ENCODE measurements at regions of chr9 and their contacts with region 1.

Region 1: GRCh38 chr9:104386425-104387069 is 117.5 kb upstream of the OR13F1 start:
- DNase-seq: peak; percentile 48
- H3K4me3 Mint-ChIP-seq: no peak overlapping the region
- H3K27ac Mint-ChIP-seq: no peak overlapping the region
- H3K4me1 Mint-ChIP-seq: no peaks in the 10 kb centered on the region
- H3K27me3 Mint-ChIP-seq: no peaks in the 10 kb centered on the region
- CTCF ChIP-seq: peak; percentile 61

Region 2: GRCh38 chr9:102631559-102631958 is 1755.0 kb before region 1 on chr9:
- CTCF ChIA-PET with region 1: no interaction called
- POLR2A ChIA-PET with region 1: no interaction called
- intact Hi-C with region 1: loop called (anchors 10 kb)
- DNase-seq: peak; percentile 35
- H3K4me3 Mint-ChIP-seq: no peak overlapping the region
- H3K27ac Mint-ChIP-seq: no peak overlapping the region
- H3K4me1 Mint-ChIP-seq: no peaks in the 10 kb centered on the region
- H3K27me3 Mint-ChIP-seq: peaks cover 1% of the 10 kb centered on the region
- CTCF ChIP-seq: peak; percentile 35

Region 3: GRCh38 chr9:103397868-103398600 is 988.5 kb before region 1 on chr9:
- CTCF ChIA-PET with region 1: interaction called, 4 read pairs
- POLR2A ChIA-PET with region 1: no interaction called
- intact Hi-C with region 1: loop called (anchors 1 kb)
- DNase-seq: peak; percentile 65
- H3K4me3 Mint-ChIP-seq: no peak overlapping the region
- H3K27ac Mint-ChIP-seq: no peak overlapping the region
- H3K4me1 Mint-ChIP-seq: peaks cover 6% of the 10 kb centered on the region
- H3K27me3 Mint-ChIP-seq: no peaks in the 10 kb centered on the region
- CTCF ChIP-seq: peak; percentile 76

Region 4: GRCh38 chr9:104027295-104027694 is 359.3 kb before region 1 on chr9:
- CTCF ChIA-PET with region 1: no interaction called
- POLR2A ChIA-PET with region 1: no interaction called
- intact Hi-C with region 1: loop called (anchors 1 kb)
- DNase-seq: no peak
- H3K4me3 Mint-ChIP-seq: peak overlapping the region; percentile 19
- H3K27ac Mint-ChIP-seq: peak overlapping the region; percentile 16
- H3K4me1 Mint-ChIP-seq: peaks cover 17% of the 10 kb centered on the region
- H3K27me3 Mint-ChIP-seq: no peaks in the 10 kb centered on the region
- CTCF ChIP-seq: no peak

Region 5: DNA sequence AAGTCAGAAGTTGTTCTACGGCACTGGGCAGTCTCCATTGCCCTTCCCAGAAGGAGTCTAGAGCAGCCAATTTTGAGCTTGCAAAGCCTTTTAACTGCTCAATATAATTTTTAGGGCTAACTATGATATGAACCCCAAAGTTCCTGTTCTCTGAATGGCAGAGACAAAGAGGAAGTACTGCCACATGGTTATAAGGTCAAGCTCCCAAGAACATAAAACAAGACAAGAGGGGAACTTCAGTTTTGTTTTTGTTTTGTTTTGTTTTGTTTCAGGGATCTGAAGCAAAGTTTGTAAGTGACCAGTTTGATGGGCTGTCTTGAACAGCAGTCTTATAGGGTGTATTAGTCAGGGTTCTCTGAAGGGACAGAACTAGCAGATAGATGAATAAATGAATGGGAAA is 304.4 kb before region 1 on chr9:
- CTCF ChIA-PET with region 1: no interaction called
- POLR2A ChIA-PET with region 1: no interaction called
- intact Hi-C with region 1: no loop called
- DNase-seq: no peak
- H3K4me3 Mint-ChIP-seq: no peak overlapping the region
- H3K27ac Mint-ChIP-seq: no peak overlapping the region
- H3K4me1 Mint-ChIP-seq: no peaks in the 10 kb centered on the region
- H3K27me3 Mint-ChIP-seq: no peaks in the 10 kb centered on the region
- CTCF ChIP-seq: no peak

Region 6: GRCh38 chr9:104367515-104367914 is 19.0 kb before region 1 on chr9:
- CTCF ChIA-PET with region 1: interaction called, 11 read pairs
- POLR2A ChIA-PET with region 1: interaction called, 4 read pairs
- intact Hi-C with region 1: no loop called
- DNase-seq: no peak
- H3K4me3 Mint-ChIP-seq: no peak overlapping the region
- H3K27ac Mint-ChIP-seq: no peak overlapping the region
- H3K4me1 Mint-ChIP-seq: no peaks in the 10 kb centered on the region
- H3K27me3 Mint-ChIP-seq: no peaks in the 10 kb centered on the region
- CTCF ChIP-seq: no peak

Region 7: DNA sequence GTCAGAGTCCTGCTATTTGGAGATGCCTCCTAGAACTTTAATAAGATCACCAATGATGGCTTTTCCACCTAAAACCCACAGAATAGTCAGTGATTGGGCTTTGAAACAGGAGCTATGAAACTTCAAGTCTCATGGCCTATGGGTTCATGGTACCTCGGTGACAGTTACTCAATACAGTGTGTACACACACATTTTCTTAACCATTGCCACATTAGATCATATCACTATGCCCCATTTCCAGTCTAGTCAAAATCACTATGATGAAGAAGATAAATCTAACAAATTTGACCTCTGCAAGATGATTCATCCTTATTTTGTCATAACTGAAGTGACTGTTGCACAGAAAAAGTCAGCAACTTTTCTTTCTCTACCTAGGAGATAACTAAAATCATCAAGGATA is 30.7 kb after region 1 on chr9:
- CTCF ChIA-PET with region 1: no interaction called
- POLR2A ChIA-PET with region 1: no interaction called
- intact Hi-C with region 1: no loop called
- DNase-seq: no peak
- H3K4me3 Mint-ChIP-seq: no peak overlapping the region
- H3K27ac Mint-ChIP-seq: no peak overlapping the region
- H3K4me1 Mint-ChIP-seq: no peaks in the 10 kb centered on the region
- H3K27me3 Mint-ChIP-seq: no peaks in the 10 kb centered on the region
- CTCF ChIP-seq: no peak

Region 8: GRCh38 chr9:104494808-104495207 is 108.3 kb after region 1 on chr9:
- CTCF ChIA-PET with region 1: interaction called, 10 read pairs
- POLR2A ChIA-PET with region 1: no interaction called
- intact Hi-C with region 1: no loop called
- DNase-seq: peak; percentile 6
- H3K4me3 Mint-ChIP-seq: no peak overlapping the region
- H3K27ac Mint-ChIP-seq: no peak overlapping the region
- H3K4me1 Mint-ChIP-seq: no peaks in the 10 kb centered on the region
- H3K27me3 Mint-ChIP-seq: no peaks in the 10 kb centered on the region
- CTCF ChIP-seq: peak; percentile 42

Region 9: DNA sequence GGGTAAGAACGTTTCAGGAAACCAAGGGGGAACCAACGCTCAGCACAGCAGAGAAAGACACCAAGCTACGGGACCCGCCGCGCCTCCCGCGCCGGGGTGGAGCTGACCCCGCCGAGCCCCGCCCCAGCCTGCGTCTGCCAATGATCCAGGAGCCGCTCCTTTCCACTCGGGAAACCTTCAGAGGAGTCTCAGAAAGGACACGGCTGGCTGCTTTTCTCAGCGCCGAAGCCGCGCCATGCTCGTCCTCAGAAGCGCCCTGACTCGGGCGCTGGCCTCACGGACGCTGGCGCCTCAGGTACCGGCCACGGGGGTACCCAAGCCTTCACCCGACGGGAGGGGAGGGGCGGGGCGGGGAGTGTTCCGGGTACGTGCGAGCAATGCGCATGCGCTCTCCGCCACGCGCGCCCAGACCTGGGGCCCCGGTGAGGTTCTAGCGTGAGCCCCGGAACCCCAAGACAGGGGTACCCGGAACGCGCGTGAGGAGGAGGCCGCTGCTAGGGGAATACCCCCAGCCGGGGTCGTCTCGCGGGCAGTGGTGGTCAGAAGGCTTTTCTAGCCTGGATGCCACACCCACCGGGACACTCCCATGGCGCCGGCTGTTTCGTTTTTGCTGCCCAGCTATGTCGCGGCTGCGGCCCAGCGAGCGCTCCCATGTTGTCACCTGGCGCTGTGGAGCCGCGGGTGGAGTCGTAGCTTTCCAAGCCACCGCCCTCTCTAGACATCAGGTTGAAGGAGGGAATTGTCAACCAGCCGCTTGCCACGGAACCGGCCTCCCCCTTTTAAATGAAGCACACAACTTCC is 361.2 kb after region 1 on chr9 and contains the start of gene NIPSNAP3A:
- CTCF ChIA-PET with region 1: interaction called, 3 read pairs
- POLR2A ChIA-PET with region 1: interaction called, 3 read pairs
- intact Hi-C with region 1: loop called (anchors 2 kb)
- DNase-seq: peak; percentile 83
- H3K4me3 Mint-ChIP-seq: peak within 1 kb of the TSS; percentile 85
- H3K27ac Mint-ChIP-seq: peak within 1 kb of the TSS; percentile 87
- H3K4me1 Mint-ChIP-seq: peaks cover 17% of the 10 kb centered on the region
- H3K27me3 Mint-ChIP-seq: no peaks in the 10 kb centered on the region
- CTCF ChIP-seq: no peak
- total RNA-seq, gene NIPSNAP3A: 15.4 and 15.5 TPM in 2 replicates

Region 10: GRCh38 chr9:104836235-104836634 is 449.7 kb after region 1 on chr9:
- CTCF ChIA-PET with region 1: no interaction called
- POLR2A ChIA-PET with region 1: no interaction called
- intact Hi-C with region 1: no loop called
- DNase-seq: no peak
- H3K4me3 Mint-ChIP-seq: no peak overlapping the region
- H3K27ac Mint-ChIP-seq: no peak overlapping the region
- H3K4me1 Mint-ChIP-seq: peaks cover 7% of the 10 kb centered on the region
- H3K27me3 Mint-ChIP-seq: no peaks in the 10 kb centered on the region
- CTCF ChIP-seq: no peak

Measured in MCF 10A (cell line).